Upper lobe of right lung (tissue), 1 donor: ENCODE measurements at regions of chr9 and their contacts with region 1.

Region 1: GRCh38 chr9:133726401-133727276 is 11.5 kb downstream of the SARDH start:
- DNase-seq: peak; percentile 39
- ATAC-seq: peak; percentile 79
- H3K4me3 ChIP-seq: no peak overlapping the region
- H3K27ac ChIP-seq: no peak overlapping the region
- H3K4me1 ChIP-seq: no peaks in the 10 kb centered on the region
- H3K27me3 ChIP-seq: no peaks in the 10 kb centered on the region
- CTCF ChIP-seq: peak; percentile 57

Region 2: DNA sequence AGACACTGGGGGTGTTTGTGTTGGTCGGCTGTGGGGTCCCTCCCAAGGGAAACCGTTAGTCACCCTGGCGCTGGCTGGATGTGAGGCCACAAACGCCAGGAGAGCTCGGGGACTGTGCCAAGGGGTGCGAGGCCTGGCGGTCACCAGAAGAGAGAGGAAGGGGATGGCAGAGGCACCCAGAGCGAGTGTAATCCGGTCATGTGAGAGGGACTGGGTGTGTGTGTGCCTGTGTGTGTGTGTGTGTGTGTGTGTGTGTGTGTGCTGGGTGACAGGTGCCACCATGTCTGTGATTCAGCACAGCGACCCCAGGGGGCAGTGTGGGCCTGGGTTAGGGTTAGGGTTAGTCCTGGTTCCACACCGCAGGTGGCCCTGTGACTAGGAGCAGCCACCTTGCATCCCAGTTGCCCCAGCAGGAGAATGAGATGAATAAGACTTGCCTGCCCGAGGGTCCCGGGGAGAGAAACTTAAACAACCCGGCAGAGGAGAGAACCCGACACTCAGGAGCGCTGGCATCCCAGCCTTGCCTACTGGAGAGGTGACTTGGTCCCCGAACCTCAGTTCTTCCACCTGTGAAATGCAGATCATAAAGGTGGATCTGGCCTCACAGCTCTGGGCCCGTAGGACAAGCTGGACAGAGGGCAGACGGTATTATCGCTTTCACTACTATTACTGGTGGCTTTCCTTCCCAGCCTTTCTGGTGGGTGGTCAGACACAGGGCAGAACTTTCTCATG is 193.5 kb before region 1 on chr9:
- intact Hi-C with region 1: loop called (anchors 5 kb)
- DNase-seq: peak; percentile 84
- ATAC-seq: peak; percentile 69
- H3K4me3 ChIP-seq: no peak overlapping the region
- H3K27ac ChIP-seq: peak overlapping the region; percentile 63
- H3K4me1 ChIP-seq: peaks cover 29% of the 10 kb centered on the region
- H3K27me3 ChIP-seq: peaks cover 22% of the 10 kb centered on the region
- CTCF ChIP-seq: peak; percentile 37

Region 3: DNA sequence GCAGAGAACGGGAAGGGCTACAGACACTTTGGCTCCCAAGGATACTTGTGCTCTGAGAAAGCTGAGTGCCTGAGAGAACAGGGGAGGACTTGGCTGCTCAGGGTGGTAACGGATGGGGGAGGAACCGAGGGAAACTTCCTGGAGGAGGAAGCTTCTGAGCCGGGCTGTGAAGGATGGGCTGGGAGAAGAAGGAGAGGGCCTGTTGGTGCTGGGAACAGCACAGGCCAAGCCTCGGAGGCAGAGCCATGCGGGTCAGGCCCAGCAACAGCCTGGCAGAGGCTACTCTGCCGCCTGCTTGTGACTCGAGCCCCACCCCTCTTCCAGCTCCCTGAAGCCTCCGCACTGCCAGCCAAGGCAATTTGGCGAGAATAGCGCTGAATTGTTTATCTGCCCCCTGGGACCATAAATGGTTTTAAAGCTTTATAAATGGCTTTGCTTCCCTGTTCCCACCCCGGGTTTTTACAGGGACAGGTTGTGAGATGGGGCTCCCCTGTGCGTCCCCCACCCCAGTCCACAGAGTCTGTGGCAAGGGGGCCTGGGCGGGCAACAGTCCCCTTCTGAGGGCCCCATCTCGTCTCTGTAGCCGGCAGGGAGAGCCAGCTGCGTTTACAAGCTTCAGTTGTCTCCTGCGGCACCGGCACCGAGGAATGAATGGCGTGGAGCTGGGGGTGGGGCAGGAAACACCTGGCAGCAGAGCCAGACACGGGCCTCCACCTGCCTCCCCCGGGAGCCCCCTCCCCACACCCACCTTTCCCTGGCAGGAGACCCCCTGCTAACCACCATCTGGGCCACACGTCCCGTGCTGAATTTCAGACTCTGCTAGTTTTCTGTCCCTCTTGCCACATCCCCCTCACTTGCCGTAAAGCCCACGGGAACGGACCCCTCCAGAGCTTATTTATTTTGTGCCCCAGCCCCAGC is 141.8 kb before region 1 on chr9:
- intact Hi-C with region 1: no loop called
- DNase-seq: no peak
- ATAC-seq: peak; percentile 29
- H3K4me3 ChIP-seq: no peak overlapping the region
- H3K27ac ChIP-seq: peak overlapping the region; percentile 11
- H3K4me1 ChIP-seq: peaks cover 20% of the 10 kb centered on the region
- H3K27me3 ChIP-seq: peaks cover 27% of the 10 kb centered on the region
- CTCF ChIP-seq: no peak

Region 4: GRCh38 chr9:134068744-134069479 is 342.3 kb after region 1 on chr9:
- intact Hi-C with region 1: no loop called
- DNase-seq: peak; percentile 61
- ATAC-seq: no peak
- H3K4me3 ChIP-seq: peak overlapping the region; percentile 72
- H3K27ac ChIP-seq: peak overlapping the region; percentile 96
- H3K4me1 ChIP-seq: peaks cover 21% of the 10 kb centered on the region
- H3K27me3 ChIP-seq: no peaks in the 10 kb centered on the region
- CTCF ChIP-seq: no peak